ENCODE measurements at regions of chr7 and their contacts with region 1.

Region 1: GRCh38 chr7:138738551-138739335 is 37.6 kb upstream of the SVOPL start:
- DNase-seq: peak; percentile 75
- H3K4me3 ChIP-seq: no peak overlapping the region
- H3K27ac ChIP-seq: no peak overlapping the region
- H3K4me1 ChIP-seq: no peaks in the 10 kb centered on the region
- CTCF ChIP-seq: peak; percentile 97

Region 2: DNA sequence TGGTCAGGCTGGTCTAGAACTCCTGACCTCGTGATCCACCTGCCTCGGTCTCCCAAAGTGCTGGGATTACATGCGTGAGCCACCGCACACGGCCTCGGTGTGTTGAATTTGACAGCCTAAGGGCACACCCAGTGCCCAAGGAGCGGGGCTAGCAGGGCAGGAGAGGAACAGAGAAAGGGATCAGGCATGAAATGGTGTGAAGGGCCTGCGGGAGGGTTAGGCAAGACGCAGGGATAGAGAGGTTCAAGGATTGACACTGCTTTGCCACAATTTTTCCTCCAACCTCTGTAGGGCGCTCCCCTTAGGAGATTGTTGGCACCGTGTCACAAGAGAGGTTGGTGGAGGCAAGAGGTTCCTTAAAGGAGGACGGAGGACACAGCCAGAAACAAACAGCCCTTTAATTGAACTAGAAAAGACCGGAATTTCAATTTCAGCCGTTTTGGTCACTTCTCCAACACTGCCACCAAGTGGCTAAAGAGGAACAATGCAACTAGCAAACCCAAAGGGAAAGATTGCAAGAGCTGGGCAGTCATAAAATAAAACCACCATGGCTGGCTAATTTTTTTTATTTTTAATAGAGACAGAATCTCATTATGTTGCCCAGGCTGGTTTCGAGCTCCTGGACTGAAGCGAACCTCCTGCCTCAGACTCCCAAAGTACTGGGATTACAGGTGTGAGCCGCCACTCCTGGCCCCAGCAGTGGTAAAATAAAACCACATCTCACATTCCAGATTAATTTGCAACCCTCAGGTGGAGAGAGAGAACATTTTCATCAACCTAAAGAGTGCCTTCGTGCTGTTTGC is 730.0 kb before region 1 on chr7:
- CTCF ChIA-PET with region 1: no interaction called
- POLR2A ChIA-PET with region 1: no interaction called
- intact Hi-C with region 1: loop called (anchors 5 kb)
- DNase-seq: peak; percentile 77
- H3K4me3 ChIP-seq: no peak overlapping the region
- H3K27ac ChIP-seq: no peak overlapping the region
- H3K4me1 ChIP-seq: no peaks in the 10 kb centered on the region
- CTCF ChIP-seq: peak; percentile 91

Region 3: DNA sequence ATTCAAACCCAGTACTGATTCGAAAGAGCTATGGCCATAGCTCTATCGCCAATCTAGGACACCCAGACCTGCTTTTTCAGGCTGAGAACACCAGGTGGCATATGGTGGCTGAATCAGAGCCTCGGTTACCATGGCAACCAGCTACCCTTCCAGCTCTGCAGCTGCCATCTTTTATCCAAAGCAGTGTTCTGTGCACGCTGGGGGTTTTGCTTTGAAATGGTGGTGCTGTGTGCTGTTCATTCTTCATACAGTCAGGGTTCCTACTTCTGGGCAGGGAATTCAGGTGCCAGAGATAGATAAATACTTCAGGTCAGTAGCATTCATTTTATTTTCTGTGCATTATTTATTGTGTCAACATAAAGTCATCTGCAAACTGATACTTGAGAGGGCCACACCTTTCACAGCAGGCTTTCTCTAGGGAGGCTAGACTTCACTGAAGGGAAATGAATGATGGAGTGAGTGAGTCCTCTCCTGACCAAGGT is 577.1 kb before region 1 on chr7:
- CTCF ChIA-PET with region 1: interaction called, 14 read pairs
- POLR2A ChIA-PET with region 1: interaction called, 3 read pairs
- intact Hi-C with region 1: loop called (anchors 1 kb)
- DNase-seq: peak; percentile 93
- H3K4me3 ChIP-seq: no peak overlapping the region
- H3K27ac ChIP-seq: no peak overlapping the region
- H3K4me1 ChIP-seq: no peaks in the 10 kb centered on the region
- CTCF ChIP-seq: peak; percentile 79

Region 4: DNA sequence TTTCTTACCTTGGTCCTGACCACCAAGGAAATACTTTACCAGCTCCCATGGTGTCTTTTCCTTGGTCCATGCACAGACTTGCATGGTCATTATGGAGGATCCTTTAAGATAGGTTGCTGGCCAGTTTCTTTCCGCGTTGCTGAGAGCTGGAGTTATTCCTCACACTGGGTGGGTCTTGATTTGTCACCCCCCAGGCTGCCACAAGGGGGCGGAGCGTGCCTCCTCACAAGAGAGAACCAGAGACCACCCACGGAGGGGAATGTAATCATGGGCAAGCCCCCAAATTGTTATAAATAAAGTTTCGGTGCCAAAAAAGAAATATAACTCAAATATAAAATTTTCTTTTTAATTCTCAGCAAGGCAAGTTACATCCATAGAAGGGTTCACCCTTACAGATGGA is 289.2 kb before region 1 on chr7:
- CTCF ChIA-PET with region 1: no interaction called
- POLR2A ChIA-PET with region 1: no interaction called
- intact Hi-C with region 1: loop called (anchors 1 kb)
- DNase-seq: peak; percentile 40
- H3K4me3 ChIP-seq: no peak overlapping the region
- H3K27ac ChIP-seq: no peak overlapping the region
- H3K4me1 ChIP-seq: no peaks in the 10 kb centered on the region
- CTCF ChIP-seq: peak; percentile 82

Region 5: DNA sequence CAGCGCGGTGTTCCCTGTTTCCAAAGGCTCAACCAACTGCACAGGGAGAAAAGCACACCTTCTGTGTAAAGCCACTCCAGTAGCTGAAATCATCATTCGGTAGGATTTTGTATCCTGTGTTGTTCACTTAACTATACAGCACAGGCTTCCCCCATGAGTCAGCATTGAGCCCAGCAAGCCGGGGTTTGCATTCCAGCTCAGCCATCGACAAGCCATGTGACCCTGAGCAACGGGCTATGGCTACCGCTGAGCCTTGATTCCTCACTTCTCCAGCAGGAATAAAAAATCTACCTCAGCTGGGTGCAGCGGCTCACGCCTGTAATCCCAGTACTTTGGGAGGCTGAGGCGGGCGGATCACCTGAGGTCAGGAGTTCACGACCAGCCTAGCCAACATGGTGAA is 103.4 kb after region 1 on chr7:
- CTCF ChIA-PET with region 1: no interaction called
- POLR2A ChIA-PET with region 1: no interaction called
- intact Hi-C with region 1: no loop called
- DNase-seq: no peak
- H3K4me3 ChIP-seq: no peak overlapping the region
- H3K27ac ChIP-seq: no peak overlapping the region
- H3K4me1 ChIP-seq: no peaks in the 10 kb centered on the region
- CTCF ChIP-seq: no peak

Region 6: DNA sequence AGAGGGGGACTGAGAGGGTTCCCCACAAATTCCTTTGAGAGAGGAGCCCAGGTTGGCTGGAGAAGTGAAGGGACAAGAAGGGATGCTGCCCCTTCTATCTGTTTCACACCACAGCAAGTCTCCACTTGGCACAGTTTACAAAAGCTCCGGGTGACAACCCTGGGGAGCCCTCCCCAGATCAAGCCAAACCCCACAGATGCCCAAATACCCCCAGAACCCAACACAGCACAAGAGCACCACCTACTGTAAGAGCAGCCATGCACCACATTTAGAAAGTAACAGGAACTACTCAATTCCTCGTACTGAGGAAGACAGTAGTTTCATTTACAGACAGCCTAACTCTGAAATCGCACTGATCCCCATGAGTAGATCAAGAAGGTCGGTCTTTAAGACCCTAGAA is 127.1 kb after region 1 on chr7:
- CTCF ChIA-PET with region 1: no interaction called
- POLR2A ChIA-PET with region 1: no interaction called
- intact Hi-C with region 1: loop called (anchors 5 kb)
- DNase-seq: peak; percentile 25
- H3K4me3 ChIP-seq: no peak overlapping the region
- H3K27ac ChIP-seq: no peak overlapping the region
- H3K4me1 ChIP-seq: no peaks in the 10 kb centered on the region
- CTCF ChIP-seq: peak; percentile 73